ENCODE measurements at regions of chr11 and their contacts with region 1.

Region 1: GRCh38 chr11:69909561-69910496 is 90.6 kb upstream of the FGF3 start:
- DNase-seq: no peak
- H3K4me3 ChIP-seq: no peak overlapping the region
- H3K27ac ChIP-seq: no peak overlapping the region
- H3K27me3 ChIP-seq: peaks cover 18% of the 10 kb centered on the region
- CTCF ChIP-seq: peak; percentile 69

Region 2: DNA sequence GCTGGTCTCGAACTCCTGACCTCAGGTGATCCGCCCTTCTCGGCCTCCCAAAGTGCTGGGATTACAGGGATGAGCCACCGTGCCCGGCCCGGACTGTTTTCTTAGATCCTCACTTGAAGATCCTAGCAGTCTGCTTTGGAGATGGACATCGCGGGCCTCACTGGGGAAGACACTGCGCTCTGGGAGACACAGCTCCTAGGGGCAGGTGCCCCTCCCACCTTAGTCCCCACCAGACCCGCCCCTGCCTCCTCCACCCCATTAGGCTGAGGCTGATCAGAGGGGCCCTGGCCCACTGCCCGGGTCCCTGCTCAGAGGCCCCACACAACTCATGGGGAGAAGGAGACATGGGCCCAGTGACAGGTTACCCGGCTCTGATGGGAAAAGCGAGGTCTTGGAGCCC is 223.4 kb before region 1 on chr11:
- CTCF ChIA-PET with region 1: interaction called, 11 read pairs
- POLR2A ChIA-PET with region 1: no interaction called
- DNase-seq: no peak
- H3K4me3 ChIP-seq: no peak overlapping the region
- H3K27ac ChIP-seq: no peak overlapping the region
- H3K27me3 ChIP-seq: peaks cover 5% of the 10 kb centered on the region
- CTCF ChIP-seq: no peak

Region 3: DNA sequence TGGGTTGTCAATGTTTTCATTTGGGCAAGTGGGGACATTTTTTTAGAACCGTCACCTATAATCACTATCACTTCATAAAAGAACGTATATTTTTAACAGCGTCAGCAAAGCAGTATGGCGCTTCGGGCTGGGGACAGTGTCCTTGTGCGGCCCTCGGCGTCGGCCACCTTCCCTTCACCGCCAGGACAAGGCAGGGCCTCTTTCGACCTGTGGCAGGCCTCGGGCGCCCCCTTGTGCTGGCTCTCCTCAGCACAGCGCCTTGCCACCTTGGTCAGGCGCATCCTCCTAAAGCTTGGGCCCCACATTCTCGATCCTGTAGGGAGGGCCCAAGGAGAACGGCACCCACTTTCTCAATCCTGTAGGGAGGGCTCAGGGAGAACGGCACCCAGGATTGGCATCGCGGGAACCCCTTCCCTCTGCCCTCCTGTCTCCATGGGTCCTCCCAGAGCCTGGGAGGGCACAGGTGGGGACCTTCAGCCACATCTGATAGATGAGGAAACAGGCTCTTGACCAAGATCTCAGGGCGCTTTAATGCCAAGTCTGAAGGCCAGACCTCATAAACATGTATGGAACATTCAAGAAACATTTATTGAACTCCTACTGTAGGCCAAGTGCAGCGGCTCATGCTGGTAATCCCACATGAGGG is 281.8 kb after region 1 on chr11:
- CTCF ChIA-PET with region 1: interaction called, 43 read pairs
- POLR2A ChIA-PET with region 1: no interaction called
- DNase-seq: no peak
- H3K4me3 ChIP-seq: no peak overlapping the region
- H3K27ac ChIP-seq: no peak overlapping the region
- H3K27me3 ChIP-seq: peaks cover 8% of the 10 kb centered on the region
- CTCF ChIP-seq: peak; percentile 91

Region 4: GRCh38 chr11:70233034-70233995 is 323.5 kb after region 1 on chr11:
- CTCF ChIA-PET with region 1: no interaction called
- POLR2A ChIA-PET with region 1: no interaction called
- DNase-seq: peak; percentile 20
- H3K4me3 ChIP-seq: no peak overlapping the region
- H3K27ac ChIP-seq: no peak overlapping the region
- H3K27me3 ChIP-seq: peaks cover 15% of the 10 kb centered on the region
- CTCF ChIP-seq: no peak